Activated CD8-positive, alpha-beta memory T cell treated with anti-CD3 and anti-CD28 coated beads, Interleukin-2, amount 10 ng/mL, durations not matched to agents 7 days and 5 days (primary cell): ENCODE measurements at regions of chr3 and their contacts with region 1.

Region 1: DNA sequence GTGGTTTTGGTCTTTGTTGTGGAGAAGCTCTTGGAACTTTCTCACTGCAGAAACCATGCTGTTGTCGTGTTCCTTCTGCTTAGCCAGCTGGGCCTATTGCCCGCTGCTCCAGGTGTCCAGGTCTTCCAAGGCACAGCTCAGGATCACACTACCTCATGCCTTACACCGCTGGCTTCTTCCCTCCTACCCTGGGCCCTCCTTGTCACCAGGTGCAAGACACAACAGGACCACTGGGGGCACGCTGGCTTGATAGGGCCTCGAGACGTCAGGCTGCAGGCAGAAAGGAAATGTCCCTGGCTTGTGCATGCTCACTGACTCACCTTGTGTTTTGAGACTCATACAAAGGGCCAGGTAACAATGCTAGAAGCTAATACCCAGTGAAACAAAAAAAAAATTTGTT is 32.3 kb downstream of the PAQR9 start:
- DNase-seq: peak; percentile 68
- ATAC-seq: peak; percentile 91
- H3K4me3 Mint-ChIP-seq: no peak overlapping the region
- H3K27ac Mint-ChIP-seq: no peak overlapping the region
- H3K4me1 Mint-ChIP-seq: no peaks in the 10 kb centered on the region
- H3K27me3 Mint-ChIP-seq: peaks cover 12% of the 10 kb centered on the region

Region 2: DNA sequence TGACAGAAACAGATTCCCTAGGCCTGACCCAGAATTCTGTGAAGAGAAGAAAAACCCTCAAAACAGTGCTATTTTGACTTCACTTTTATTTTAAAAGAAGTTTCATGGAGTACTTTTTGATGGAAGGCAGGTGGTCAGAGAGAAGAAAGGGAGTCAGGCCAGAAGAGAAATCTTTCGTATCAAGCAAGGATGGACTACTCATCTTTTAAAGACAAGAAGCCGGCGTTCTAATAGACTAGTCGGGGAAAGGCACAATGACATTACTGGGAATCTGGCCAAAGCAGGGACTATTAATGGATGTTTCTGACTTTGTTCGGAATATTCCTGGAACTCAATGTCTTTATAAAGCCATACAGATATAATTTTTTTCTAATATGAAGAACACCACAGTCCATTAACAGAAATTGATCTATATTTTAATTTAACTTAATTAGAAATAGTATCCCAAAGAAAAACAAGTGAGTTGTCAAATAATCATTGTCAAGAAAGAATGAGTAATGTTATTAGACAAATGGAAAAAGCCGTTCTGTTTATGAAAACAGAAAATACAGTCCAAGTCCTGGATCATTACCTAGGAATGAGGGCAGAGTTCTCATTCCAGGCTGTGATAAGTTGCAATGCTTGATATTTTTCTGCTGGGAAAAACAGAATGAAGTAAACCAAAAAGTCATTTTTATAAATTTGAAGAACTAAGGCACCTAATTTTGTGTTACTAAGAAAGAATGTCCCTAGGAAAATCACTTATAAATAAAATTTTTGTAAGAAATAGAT is 18.6 kb before region 1 on chr3:
- CTCF ChIA-PET with region 1: no interaction called
- DNase-seq: no peak
- ATAC-seq: no peak
- H3K4me3 Mint-ChIP-seq: no peak overlapping the region
- H3K27ac Mint-ChIP-seq: no peak overlapping the region
- H3K4me1 Mint-ChIP-seq: peaks cover 2% of the 10 kb centered on the region
- H3K27me3 Mint-ChIP-seq: peaks cover 46% of the 10 kb centered on the region

Region 3: GRCh38 chr3:142944342-142944741 is 13.1 kb after region 1 on chr3:
- CTCF ChIA-PET with region 1: interaction called, 24 read pairs
- DNase-seq: no peak
- ATAC-seq: peak; percentile 62
- H3K4me3 Mint-ChIP-seq: peak overlapping the region; percentile 64
- H3K27ac Mint-ChIP-seq: peak overlapping the region; percentile 86
- H3K4me1 Mint-ChIP-seq: peaks cover 39% of the 10 kb centered on the region
- H3K27me3 Mint-ChIP-seq: peaks cover 21% of the 10 kb centered on the region

Region 4: DNA sequence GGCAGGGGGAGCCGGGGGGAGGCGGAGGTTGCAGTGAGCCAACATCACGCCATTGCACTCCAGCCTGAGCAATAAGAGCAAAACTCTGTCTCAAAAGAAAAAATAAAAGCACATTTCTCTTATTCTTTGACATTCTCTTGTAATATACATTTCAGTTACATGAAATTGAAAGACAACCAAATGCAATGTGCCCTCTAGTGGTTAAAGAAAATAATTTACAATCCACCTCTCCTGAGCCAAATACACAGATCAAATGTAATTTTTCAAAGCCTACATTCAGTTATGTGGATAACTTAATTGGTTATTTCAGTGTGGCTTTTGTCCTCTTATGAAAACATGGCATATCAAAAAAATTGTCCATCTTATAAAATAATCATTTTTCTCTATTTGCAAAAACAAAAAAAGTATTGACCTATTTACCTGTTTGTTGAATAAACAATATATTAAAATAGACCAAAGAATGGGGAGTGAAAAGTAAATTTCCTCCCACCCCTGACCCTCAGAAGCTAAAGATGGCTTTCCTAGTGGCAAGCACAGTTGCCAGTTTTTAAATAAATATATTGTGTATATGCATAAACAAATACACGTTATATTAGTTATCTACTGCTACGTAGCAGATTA is 56.0 kb after region 1 on chr3:
- CTCF ChIA-PET with region 1: interaction called, 12 read pairs
- DNase-seq: no peak
- ATAC-seq: peak; percentile 55
- H3K4me3 Mint-ChIP-seq: no peak overlapping the region
- H3K27ac Mint-ChIP-seq: no peak overlapping the region
- H3K4me1 Mint-ChIP-seq: peaks cover 3% of the 10 kb centered on the region
- H3K27me3 Mint-ChIP-seq: peaks cover 20% of the 10 kb centered on the region

Region 5: DNA sequence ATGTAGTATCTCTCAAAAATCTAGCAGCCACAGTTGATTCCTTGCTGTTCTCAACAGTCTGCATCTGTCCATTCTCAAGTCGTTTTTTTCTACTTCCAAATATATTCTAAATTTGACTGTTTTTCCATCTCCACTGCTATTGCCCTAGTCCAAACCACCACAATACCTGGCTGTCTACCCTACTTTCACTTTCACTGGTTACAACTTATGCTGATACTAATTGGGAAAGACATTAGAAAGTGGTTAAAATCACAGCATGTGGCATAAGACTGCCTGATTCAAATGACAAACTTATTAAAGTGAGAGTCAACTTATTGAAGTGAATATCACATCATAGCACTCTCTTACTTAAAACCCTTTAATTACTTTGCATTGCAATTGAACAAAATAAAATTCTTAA is 261.0 kb after region 1 on chr3:
- CTCF ChIA-PET with region 1: no interaction called
- DNase-seq: no peak
- ATAC-seq: no peak
- H3K4me3 Mint-ChIP-seq: no peak overlapping the region
- H3K27ac Mint-ChIP-seq: no peak overlapping the region
- H3K4me1 Mint-ChIP-seq: peaks cover 7% of the 10 kb centered on the region
- H3K27me3 Mint-ChIP-seq: peaks cover 3% of the 10 kb centered on the region